ENCODE measurements at regions of chr7 and their contacts with region 1.

Region 1: DNA sequence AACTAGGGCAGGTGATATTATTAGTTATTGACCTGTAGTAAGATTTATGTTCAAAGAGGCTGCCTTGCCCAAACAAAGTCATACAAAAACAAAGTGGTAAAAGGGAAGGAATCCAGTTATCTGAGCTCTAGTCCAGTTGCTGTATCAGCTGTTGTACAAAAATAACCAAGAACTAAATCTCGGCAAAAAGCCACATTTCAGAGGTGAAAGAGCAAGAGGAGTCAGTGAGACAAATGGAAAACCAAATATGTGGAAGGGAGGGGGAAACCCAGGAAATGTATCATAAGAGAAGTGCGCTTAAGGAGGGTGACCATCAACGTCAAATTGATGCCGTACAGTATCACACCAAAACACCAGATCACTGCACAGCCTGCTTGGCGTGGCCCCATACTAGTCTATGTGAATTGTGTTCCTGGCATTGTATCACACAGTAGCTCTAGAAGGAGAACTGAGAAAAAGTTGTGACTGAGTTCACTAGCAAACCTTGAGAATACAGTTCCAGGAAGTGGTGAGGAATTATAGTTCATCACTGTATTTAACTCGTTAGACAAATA is 6.4 kb downstream of the AGBL3 start:
- DNase-seq: peak in 1 of 2 donors; percentile 38
- H3K4me3 ChIP-seq: no peak overlapping the region
- H3K27ac ChIP-seq: peak overlapping the region; percentile 20 to 69 (median 58)
- H3K4me1 ChIP-seq: peaks cover 30 to 83% (median 58%) of the 10 kb centered on the region in 4 donors
- H3K27me3 ChIP-seq: no peaks in the 10 kb centered on the region
- CTCF ChIP-seq: no peak
- EP300 ChIP-seq: no peak
- POLR2A ChIP-seq: no peak

Region 2: GRCh38 chr7:135169141-135169960 is 176.6 kb after region 1 on chr7:
- intact Hi-C with region 1: loop called (anchors 10 kb)
- DNase-seq: peak in 1 of 2 donors; percentile 48
- H3K4me3 ChIP-seq: peak overlapping the region; percentile 66 to 91 (median 78)
- H3K27ac ChIP-seq: peak overlapping the region; percentile 89 to 99 (median 96)
- H3K4me1 ChIP-seq: peaks cover 35 to 65% (median 60%) of the 10 kb centered on the region in 4 donors
- H3K27me3 ChIP-seq: no peaks in the 10 kb centered on the region
- CTCF ChIP-seq: peak in 1 of 7 experiments; percentile 27
- EP300 ChIP-seq: no peak
- POLR2A ChIP-seq: no peak